Heart right ventricle (tissue), 16 donors: ENCODE measurements at regions of chr11 and their contacts with region 1.

Region 1: DNA sequence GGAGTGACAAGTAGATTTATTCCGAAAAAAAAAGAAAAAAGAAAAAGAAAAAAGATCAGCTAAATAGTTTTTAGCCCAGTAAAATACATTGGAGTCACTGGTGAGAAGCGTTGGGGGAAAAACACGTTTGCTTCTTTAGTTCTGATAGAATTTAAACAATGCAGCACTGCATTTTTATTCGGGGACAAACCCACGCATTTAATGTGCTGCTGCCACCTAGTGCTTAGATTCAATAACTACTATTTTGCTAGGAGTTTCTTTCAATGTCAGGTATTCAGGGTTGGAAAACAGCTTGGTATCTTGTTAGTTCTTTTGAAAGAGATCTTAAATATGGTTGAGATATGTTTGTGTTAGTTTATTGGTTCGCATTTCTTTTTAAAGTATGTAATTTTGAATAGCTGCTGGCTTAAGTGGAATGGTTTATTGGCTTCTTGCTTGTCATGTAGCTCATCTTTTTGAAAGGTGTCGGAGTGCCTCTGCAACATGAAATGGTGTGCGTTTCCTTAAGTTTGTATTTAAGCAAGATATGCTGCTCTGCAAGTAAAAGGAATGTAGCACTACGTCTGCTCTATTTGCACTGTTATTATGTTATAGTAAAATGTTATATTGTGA is 41.9 kb downstream of the SVIP start:
- DNase-seq: no peak
- ATAC-seq: no peak
- H3K4me3 ChIP-seq: no peak overlapping the region
- H3K27ac ChIP-seq: no peak overlapping the region
- H3K4me1 ChIP-seq: peaks cover 0 to 4% (median 0%) of the 10 kb centered on the region in 9 donors
- H3K27me3 ChIP-seq: no peaks in the 10 kb centered on the region
- CTCF ChIP-seq: peak; percentile 45 to 85 (median 76)

Region 2: DNA sequence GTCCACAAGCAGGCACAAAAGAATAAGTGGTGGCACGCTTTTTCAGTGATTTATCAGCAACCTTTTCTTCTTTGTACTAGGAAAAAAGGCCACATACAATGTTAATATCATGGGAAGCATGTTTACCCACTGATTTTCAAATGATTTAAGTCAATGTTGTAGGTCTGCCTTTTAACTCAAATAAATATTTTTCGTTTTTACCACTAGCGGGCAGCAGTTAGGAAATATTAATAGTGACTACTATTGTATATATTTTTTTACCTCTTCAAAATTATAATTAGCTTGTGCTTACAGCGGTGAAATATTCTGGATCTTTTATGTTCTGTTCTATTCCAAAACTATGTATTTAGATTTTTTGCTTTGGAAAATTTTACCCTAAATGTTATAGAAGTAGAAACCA is 455.9 kb before region 1 on chr11:
- intact Hi-C with region 1: loop called (anchors 1 to 5 kb)
- DNase-seq: no peak
- ATAC-seq: no peak
- H3K4me3 ChIP-seq: no peak overlapping the region
- H3K27ac ChIP-seq: no peak overlapping the region
- H3K4me1 ChIP-seq: no peaks in the 10 kb centered on the region
- H3K27me3 ChIP-seq: peaks cover 0 to 34% (median 14%) of the 10 kb centered on the region in 7 donors
- CTCF ChIP-seq: peak in 1 of 9 donors; percentile 12

Region 3: GRCh38 chr11:22625448-22626287 is 162.0 kb before region 1 on chr11 and contains the start of gene FANCF:
- intact Hi-C with region 1: loop called in 1 of 10 experiments (anchors 10 kb)
- DNase-seq: peak; percentile 87 to 98
- ATAC-seq: peak; percentile 98 to 99 (median 98)
- H3K4me3 ChIP-seq: peak within 1 kb of the TSS; percentile 37 to 98 (median 84)
- H3K27ac ChIP-seq: peak within 1 kb of the TSS; percentile 60 to 94 (median 85)
- H3K4me1 ChIP-seq: peaks cover 0 to 22% (median 18%) of the 10 kb centered on the region in 9 donors
- H3K27me3 ChIP-seq: no peaks in the 10 kb centered on the region
- CTCF ChIP-seq: no peak
- total RNA-seq, gene FANCF: 3.1 to 7.6 (median 4.8) TPM

Region 4: GRCh38 chr11:22742157-22742613 is 45.5 kb before region 1 on chr11:
- intact Hi-C with region 1: no loop called
- DNase-seq: no peak
- ATAC-seq: no peak
- H3K4me3 ChIP-seq: no peak overlapping the region
- H3K27ac ChIP-seq: no peak overlapping the region
- H3K4me1 ChIP-seq: no peaks in the 10 kb centered on the region
- H3K27me3 ChIP-seq: no peaks in the 10 kb centered on the region
- CTCF ChIP-seq: no peak

Region 5: GRCh38 chr11:22752908-22753310 is 34.7 kb before region 1 on chr11:
- intact Hi-C with region 1: no loop called
- DNase-seq: no peak
- ATAC-seq: no peak
- H3K4me3 ChIP-seq: no peak overlapping the region
- H3K27ac ChIP-seq: no peak overlapping the region
- H3K4me1 ChIP-seq: peaks cover 0 to 12% (median 0%) of the 10 kb centered on the region in 9 donors
- H3K27me3 ChIP-seq: no peaks in the 10 kb centered on the region
- CTCF ChIP-seq: no peak